ENCODE measurements at regions of chr14 and their contacts with region 1.

Region 1: GRCh38 chr14:90677484-90678050 is 138.7 kb downstream of the TTC7B start:
- DNase-seq: peak; percentile 37
- H3K4me3 Mint-ChIP-seq: peak overlapping the region; percentile 16
- H3K27ac Mint-ChIP-seq: peak overlapping the region; percentile 82
- H3K4me1 Mint-ChIP-seq: peaks cover 38% of the 10 kb centered on the region
- H3K27me3 Mint-ChIP-seq: no peaks in the 10 kb centered on the region

Region 2: DNA sequence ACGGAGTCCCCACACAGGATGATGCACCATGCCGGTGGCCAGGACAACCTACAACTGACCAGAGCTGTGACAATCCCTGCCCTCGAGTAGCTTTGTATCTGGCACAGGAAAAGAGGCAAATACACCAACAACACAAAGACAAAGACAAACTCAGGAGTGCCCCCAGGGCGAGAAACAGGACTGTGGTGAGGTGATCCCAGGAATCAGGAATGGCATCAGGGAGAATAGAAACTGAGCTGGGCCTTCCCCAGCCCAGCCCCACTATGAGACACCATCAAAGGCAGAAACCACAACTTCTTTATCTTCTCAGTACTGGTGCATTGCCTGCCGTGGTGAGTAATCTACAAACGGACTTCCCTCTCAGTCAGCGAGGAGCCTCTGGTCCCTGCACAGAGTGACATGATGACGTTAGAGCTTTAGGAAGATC is 19.0 kb before region 1 on chr14:
- CTCF ChIA-PET with region 1: interaction called, 3 read pairs
- intact Hi-C with region 1: loop called (anchors 1 kb)
- DNase-seq: peak; percentile 55
- H3K4me3 Mint-ChIP-seq: no peak overlapping the region
- H3K27ac Mint-ChIP-seq: no peak overlapping the region
- H3K4me1 Mint-ChIP-seq: peaks cover 11% of the 10 kb centered on the region
- H3K27me3 Mint-ChIP-seq: no peaks in the 10 kb centered on the region

Region 3: DNA sequence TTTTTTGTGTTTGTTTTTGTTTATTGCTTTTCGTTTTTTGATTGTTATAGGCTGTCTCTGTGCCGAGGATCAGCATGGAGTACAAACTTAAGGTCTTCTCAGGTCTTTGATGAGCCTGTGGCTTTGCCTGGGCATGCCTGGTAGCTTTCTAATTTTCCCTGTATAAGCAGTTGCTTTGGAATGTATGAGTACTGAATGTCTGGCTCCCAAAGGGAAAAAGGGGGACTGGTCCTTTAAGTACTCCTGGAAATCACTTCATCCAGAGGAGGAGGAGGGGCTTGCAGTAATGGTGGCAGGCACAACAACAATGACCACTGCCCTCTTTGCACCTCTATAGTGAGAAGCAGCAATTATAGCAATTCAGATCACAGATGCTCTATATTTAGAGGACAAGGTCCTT is 206.2 kb after region 1 on chr14:
- CTCF ChIA-PET with region 1: no interaction called
- intact Hi-C with region 1: no loop called
- DNase-seq: no peak
- H3K4me3 Mint-ChIP-seq: no peak overlapping the region
- H3K27ac Mint-ChIP-seq: no peak overlapping the region
- H3K4me1 Mint-ChIP-seq: no peaks in the 10 kb centered on the region
- H3K27me3 Mint-ChIP-seq: no peaks in the 10 kb centered on the region